K562 (cell line): ENCODE measurements at regions of chr12 and their contacts with region 1.

Region 1: DNA sequence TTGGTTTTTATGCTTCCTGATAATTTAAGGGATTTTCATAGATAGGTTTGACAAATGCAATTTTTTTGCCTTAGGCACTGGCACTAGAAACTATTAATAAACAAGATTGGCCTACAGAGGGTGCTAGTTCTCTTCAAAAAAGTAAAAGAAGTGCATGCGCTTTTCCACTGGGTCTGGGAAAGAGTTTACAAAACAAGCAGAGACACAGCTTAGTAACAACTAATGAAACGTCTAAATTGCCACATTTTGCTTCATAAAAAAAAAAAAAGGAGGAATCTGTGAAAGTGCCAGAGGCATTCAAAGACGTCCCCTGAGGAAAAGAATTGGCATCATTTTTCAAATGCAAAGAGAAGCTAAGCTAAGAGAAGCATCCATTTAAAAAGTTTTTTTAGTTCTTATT is 58.3 kb upstream of the EEA1 start:
- DNase-seq: peak; percentile 48 to 76 (median 56)
- ATAC-seq: peak; percentile 91
- H3K4me3 ChIP-seq: no peak overlapping the region
- H3K27ac ChIP-seq: no peak overlapping the region
- H3K4me1 ChIP-seq: peaks cover 0 to 12% of the 10 kb centered on the region in 2 experiments; a peak in 1 of 5 replicates
- H3K27me3 ChIP-seq: no peaks in the 10 kb centered on the region
- CTCF ChIP-seq: peak; percentile 42 to 80 (median 47); a peak in 4 of 6 replicates
- EP300 ChIP-seq: no peak
- POLR2A ChIP-seq: no peak
- RAD21 ChIP-seq: peak; percentile 85 to 88

Region 2: DNA sequence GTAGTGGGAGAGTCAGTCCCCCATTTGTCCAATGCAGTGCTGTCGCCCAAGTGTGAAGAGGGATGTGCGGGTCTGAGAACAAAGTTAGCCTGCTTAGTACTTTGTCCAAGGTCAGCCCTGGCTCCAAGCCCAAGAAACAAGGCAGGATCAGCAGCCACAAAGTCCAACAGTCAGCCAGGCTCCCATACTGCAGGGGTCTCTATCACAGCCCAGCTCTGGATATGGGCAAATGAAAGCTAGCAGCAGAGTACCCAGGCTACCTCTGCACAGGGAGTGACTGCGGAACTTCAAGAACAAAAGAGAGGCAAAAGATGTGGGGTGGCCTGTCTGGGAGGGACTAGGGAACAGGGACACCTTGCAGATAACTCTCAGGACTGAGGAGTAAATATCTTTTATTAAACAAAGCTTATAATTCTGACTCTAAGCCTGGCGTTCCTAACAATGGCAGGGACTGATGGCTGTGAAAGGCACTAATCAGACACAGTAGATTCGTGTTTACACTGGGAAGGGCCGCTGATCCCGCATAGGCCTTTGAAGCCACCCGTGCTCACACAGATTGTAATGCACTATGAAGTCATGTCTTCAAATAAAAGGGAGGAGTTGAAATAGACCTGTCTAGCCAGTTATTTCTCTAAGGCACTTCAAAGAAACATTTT is 32.7 kb after region 1 on chr12:
- CTCF ChIA-PET with region 1: no interaction called
- POLR2A ChIA-PET with region 1: interaction called, 3 read pairs
- in situ Hi-C with region 1: no loop called
- intact Hi-C with region 1: loop called (anchors 1 kb)
- DNase-seq: peak in 3 of 4 experiments; percentile 22 to 60 (median 44)
- ATAC-seq: peak; percentile 80
- H3K4me3 ChIP-seq: no peak overlapping the region
- H3K27ac ChIP-seq: peak overlapping the region; percentile 63
- H3K4me1 ChIP-seq: peaks cover 8 to 39% of the 10 kb centered on the region in 2 experiments; a peak in 3 of 5 replicates
- H3K27me3 ChIP-seq: no peaks in the 10 kb centered on the region
- CTCF ChIP-seq: no peak
- EP300 ChIP-seq: no peak
- POLR2A ChIP-seq: no peak
- RAD21 ChIP-seq: no peak

Region 3: DNA sequence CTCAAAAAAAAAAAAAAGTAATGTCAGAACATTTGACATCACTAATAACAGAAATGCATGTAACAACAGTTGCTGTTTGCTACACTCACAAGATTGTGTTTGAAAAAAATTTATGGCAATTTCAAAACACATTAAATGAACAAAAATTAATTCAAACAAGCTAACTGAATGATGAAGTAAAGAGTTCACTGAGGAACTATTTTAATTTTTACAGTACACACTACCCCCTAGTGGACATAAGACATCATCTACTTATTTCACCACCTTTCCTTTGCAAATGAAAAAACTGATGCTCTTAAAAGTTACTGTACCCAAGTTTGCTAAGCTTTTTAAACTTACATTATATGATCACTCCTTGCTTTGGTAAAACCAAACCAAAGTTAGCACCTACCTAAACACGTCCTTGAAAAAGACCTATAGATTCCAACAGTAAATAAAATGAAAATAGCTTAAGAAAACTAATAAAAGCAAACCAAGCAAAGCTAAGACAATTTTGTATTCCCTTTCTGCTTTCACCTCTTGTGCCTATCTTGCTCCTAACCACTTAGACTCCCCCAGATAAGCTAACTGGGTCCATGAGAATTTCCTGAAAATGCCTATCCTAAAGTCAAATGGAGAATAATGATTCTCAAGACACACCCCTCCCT is 432.1 kb after region 1 on chr12:
- CTCF ChIA-PET with region 1: interaction called, 11 read pairs
- POLR2A ChIA-PET with region 1: interaction called, 7 read pairs
- in situ Hi-C with region 1: loop called (anchors 25 kb)
- intact Hi-C with region 1: loop called (anchors 5 kb)
- DNase-seq: peak; percentile 34 to 53 (median 46)
- ATAC-seq: peak; percentile 77
- H3K4me3 ChIP-seq: no peak overlapping the region
- H3K27ac ChIP-seq: no peak overlapping the region
- H3K4me1 ChIP-seq: peaks cover 3 to 14% of the 10 kb centered on the region in 2 experiments; a peak in 2 of 5 replicates
- H3K27me3 ChIP-seq: no peaks in the 10 kb centered on the region
- CTCF ChIP-seq: peak; percentile 7 to 71 (median 27); a peak in 4 of 6 replicates
- EP300 ChIP-seq: no peak
- POLR2A ChIP-seq: no peak
- RAD21 ChIP-seq: peak; percentile 65 to 77